SK-N-SH (cell line): ENCODE measurements at regions of chr17 and their contacts with region 1.

Region 1: DNA sequence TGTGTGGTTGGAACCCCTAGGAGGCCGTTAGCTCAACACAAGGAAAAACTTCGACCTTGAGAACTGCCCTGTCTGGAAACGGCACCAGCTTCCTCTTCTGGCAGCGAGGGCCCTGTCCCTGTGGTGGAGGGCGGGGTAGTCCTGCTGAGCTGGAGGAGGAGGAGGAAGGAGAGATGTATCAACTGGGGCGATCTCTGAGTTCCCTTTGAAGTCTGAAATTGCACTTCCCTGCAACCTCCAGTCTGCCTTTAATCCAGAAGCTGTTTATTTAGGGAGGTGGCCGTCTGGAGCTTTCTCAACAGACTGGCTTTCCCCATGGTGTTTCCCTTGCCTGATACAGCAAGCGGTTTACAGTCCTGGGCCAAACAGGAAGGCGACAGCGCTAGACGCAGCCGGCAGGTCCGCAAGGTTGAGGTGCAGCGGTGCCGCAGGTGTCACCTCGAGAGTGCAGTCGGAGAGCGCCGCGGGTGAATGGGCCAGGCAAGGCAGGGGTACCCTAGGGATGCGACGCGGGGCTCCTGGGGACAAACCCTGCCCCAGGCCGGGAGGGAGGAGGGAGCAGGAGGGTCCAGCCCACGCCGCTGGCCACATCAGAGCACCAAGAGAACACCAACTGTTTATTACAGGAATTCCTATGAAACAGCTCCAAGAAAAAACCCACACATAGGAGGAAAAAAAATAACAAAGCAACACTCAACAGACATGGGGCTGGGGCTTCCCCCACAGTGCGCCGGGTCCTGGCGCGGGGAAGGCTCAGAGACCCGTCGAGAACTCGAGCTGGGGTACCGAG is 11.4 kb upstream of the MRPS23 start:
- DNase-seq: peak; percentile 70
- H3K4me3 ChIP-seq: peak overlapping the region in 1 of 2 experiments; percentile 28; a peak in 1 of 4 replicates
- H3K27ac ChIP-seq: no peak overlapping the region; a peak in 1 of 4 replicates
- H3K4me1 ChIP-seq: peaks cover 14 to 22% of the 10 kb centered on the region in 2 experiments; a peak in 3 of 4 replicates
- H3K27me3 ChIP-seq: no peaks in the 10 kb centered on the region
- CTCF ChIP-seq: no peak
- EP300 ChIP-seq: no peak
- RAD21 ChIP-seq: no peak

Region 2: DNA sequence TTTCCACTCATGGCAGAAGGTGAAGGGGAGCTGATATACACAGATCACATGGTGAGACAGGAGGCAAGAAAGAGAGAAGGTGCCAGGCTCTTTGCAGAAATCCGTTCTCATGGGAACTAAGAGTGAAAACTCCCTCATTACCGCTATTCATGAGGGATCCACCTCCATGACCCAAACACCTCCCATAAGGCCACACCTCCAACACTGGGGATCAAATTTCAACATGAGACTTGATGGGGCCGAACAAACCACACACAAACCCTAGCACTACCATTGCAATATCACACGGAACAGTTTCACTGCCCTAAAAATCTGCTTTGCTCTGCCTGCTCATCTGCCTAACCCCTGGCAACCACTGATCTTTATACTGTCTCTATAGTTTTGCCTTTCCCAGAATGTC is 1062.3 kb before region 1 on chr17:
- CTCF ChIA-PET with region 1: no interaction called
- POLR2A ChIA-PET with region 1: no interaction called
- DNase-seq: no peak
- H3K4me3 ChIP-seq: no peak overlapping the region
- H3K27ac ChIP-seq: no peak overlapping the region
- H3K4me1 ChIP-seq: no peaks in the 10 kb centered on the region
- H3K27me3 ChIP-seq: no peaks in the 10 kb centered on the region
- CTCF ChIP-seq: no peak
- EP300 ChIP-seq: no peak
- RAD21 ChIP-seq: no peak

Region 3: GRCh38 chr17:57849874-57850754 is 11.1 kb before region 1 on chr17 and contains the start of gene MRPS23:
- CTCF ChIA-PET with region 1: interaction called, 171 read pairs
- POLR2A ChIA-PET with region 1: interaction called, 8 read pairs
- DNase-seq: peak; percentile 98
- H3K4me3 ChIP-seq: peak within 1 kb of the TSS; percentile 92 to 98
- H3K27ac ChIP-seq: peak within 1 kb of the TSS; percentile 82 to 93
- H3K4me1 ChIP-seq: peaks cover 0 to 23% of the 10 kb centered on the region in 2 experiments; a peak in 3 of 4 replicates
- H3K27me3 ChIP-seq: no peaks in the 10 kb centered on the region
- CTCF ChIP-seq: no peak
- EP300 ChIP-seq: peak; percentile 35 to 53; a peak in 2 of 4 replicates
- RAD21 ChIP-seq: 0 out of 2 replicates have a peak, but pooled peaks have one; percentile 2
- polyA plus RNA-seq, gene MRPS23: 105 and 108 TPM in 2 replicates

Region 4: GRCh38 chr17:57902800-57903759 is 41.9 kb after region 1 on chr17:
- CTCF ChIA-PET with region 1: interaction called, 32 read pairs
- POLR2A ChIA-PET with region 1: no interaction called
- DNase-seq: no peak
- H3K4me3 ChIP-seq: no peak overlapping the region
- H3K27ac ChIP-seq: peak overlapping the region; percentile 43 to 86
- H3K4me1 ChIP-seq: peaks cover 49 to 53% of the 10 kb centered on the region in 2 experiments; a peak in 3 of 4 replicates
- H3K27me3 ChIP-seq: no peaks in the 10 kb centered on the region
- CTCF ChIP-seq: no peak
- EP300 ChIP-seq: peak in 1 of 2 experiments; percentile 67; a peak in 1 of 4 replicates
- RAD21 ChIP-seq: no peak

Region 5: GRCh38 chr17:57946798-57947358 is 85.7 kb after region 1 on chr17:
- CTCF ChIA-PET with region 1: interaction called, 23 read pairs
- POLR2A ChIA-PET with region 1: no interaction called
- DNase-seq: no peak
- H3K4me3 ChIP-seq: 0 out of 4 replicates have a peak overlapping the region, but pooled peaks of 1 of the 2 experiments have one; percentile 3
- H3K27ac ChIP-seq: peak overlapping the region in 1 of 2 experiments; percentile 95; a peak in 2 of 4 replicates
- H3K4me1 ChIP-seq: peaks cover 26 to 70% of the 10 kb centered on the region in 2 experiments
- H3K27me3 ChIP-seq: no peaks in the 10 kb centered on the region
- CTCF ChIP-seq: no peak
- EP300 ChIP-seq: no peak
- RAD21 ChIP-seq: no peak

Region 6: DNA sequence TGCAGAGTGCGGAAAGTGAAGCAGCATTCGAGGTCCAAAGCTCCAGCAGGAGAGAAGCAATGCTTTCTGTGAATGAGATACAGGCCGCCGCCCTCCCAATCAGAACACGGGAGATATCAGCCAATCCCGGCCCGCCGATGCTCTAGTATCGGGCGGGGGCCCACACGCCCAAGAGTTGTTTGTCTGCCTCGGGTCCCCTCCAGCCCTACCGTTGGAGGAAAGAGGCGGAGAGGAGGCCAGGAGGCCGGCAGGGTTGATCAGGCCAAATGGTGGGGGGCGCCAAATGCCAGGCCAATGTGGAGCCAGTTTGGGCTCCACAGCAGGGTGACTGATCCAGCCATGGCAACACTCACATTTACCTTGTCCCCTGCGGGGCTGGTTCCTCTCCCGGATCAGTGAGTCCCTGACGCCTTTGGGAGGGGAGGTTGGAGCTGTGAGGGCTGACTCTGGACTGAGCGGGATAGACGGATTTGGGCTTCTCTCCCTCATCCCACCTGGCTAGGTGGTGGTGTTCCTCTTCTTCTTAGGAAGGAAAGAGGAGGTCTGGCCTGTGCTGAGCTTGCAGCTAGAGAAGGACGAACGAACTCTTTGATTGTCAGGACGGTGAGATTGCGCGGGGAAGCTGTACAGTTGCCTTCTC is 104.4 kb after region 1 on chr17:
- CTCF ChIA-PET with region 1: interaction called, 13 read pairs
- POLR2A ChIA-PET with region 1: no interaction called
- DNase-seq: no peak
- H3K4me3 ChIP-seq: no peak overlapping the region
- H3K27ac ChIP-seq: no peak overlapping the region
- H3K4me1 ChIP-seq: peaks cover 4% of the 10 kb centered on the region in 2 experiments; a peak in 2 of 4 replicates
- H3K27me3 ChIP-seq: no peaks in the 10 kb centered on the region
- CTCF ChIP-seq: no peak
- EP300 ChIP-seq: no peak
- RAD21 ChIP-seq: no peak

Region 7: DNA sequence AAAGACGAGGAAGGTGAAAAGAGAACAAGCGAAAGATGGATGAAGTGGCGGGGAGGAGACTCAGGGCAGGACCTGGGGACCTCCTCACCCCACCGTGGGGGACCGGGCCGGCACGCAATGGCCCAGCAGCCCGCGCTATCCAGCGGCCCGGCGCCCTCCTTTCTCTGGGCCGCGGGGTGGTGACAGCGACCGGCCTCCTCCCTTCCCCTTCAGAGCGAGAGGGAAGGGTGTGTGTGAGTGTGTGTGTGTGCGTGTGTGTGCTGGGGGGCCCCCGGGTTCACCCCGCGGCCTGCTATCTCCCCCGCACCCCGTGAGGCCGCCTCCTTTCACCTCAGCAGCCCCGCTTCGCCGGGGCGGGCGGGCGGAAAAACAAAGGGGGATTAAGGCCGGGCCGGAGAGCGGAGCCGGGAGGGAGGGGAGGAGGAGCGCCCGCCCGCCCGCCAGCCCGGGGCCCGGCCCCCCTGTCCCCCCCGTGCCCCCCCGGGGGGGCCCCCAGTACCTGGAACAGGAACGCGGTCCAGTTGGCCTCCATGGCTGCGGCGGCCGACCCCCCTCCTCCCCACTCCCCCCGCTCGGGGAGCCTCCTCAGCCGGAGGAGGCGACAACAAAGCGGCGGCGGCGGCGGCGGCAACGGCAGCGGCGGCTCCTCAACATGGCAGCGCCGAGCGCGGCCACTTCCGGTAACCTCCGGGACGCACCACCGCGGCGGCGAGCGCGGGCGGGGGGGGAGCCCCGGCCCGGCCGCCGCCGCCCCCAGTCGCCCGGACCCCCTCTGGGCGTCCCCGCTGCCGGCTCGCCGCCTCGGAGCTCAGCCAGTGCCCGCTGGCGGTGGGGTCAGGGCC is 126.6 kb after region 1 on chr17 and contains the start of gene VEZF1:
- CTCF ChIA-PET with region 1: interaction called, 1,002 read pairs
- POLR2A ChIA-PET with region 1: interaction called, 36 read pairs
- DNase-seq: peak; percentile 96
- H3K4me3 ChIP-seq: peak within 1 kb of the TSS; percentile 78 to 98
- H3K27ac ChIP-seq: peak within 1 kb of the TSS; percentile 96 to 100
- H3K4me1 ChIP-seq: peaks cover 20 to 47% of the 10 kb centered on the region in 2 experiments
- H3K27me3 ChIP-seq: no peaks in the 10 kb centered on the region
- CTCF ChIP-seq: no peak
- EP300 ChIP-seq: no peak
- RAD21 ChIP-seq: no peak
- polyA plus RNA-seq, gene VEZF1: 35.1 and 43.0 TPM in 2 replicates